PC-9 (cell line): ENCODE measurements at regions of chr12 and their contacts with region 1.

Region 1: DNA sequence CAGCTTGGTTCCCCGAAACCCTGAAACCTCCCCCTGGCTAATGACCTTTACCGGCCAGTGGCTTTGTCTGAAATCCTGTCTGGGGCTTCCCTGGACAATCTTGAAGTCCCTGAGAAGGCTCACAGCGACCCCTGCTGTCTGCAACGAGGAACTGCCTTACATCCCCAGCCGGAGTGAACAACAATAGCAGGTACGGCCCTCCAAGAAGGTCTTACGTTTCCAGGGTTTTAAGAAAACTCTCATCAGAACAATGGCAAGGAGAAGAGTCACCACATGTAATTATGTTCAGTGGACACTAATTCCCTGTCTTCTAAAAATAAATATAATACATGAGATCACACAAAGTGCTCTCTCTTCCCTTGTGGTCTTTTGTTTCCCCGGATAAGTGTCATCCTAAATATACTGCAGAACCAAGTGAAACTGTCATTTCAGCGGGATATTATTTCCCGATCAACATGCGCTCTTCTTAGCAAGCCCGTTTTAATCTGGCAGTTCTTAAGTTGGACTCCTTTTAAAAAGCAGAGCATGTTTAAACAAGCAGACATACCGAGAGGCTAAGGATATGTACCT is 53.3 kb downstream of the RBM19 start:
- DNase-seq: peak; percentile 44 to 70
- H3K4me3 ChIP-seq: no peak overlapping the region
- H3K27ac ChIP-seq: no peak overlapping the region
- H3K4me1 ChIP-seq: no peaks in the 10 kb centered on the region
- H3K27me3 ChIP-seq: no peaks in the 10 kb centered on the region
- CTCF ChIP-seq: peak; percentile 94

Region 2: GRCh38 chr12:112992541-112993398 is 920.1 kb before region 1 on chr12:
- CTCF ChIA-PET with region 1: no interaction called
- POLR2A ChIA-PET with region 1: no interaction called
- intact Hi-C with region 1: loop called (anchors 2 kb)
- DNase-seq: peak; percentile 48 to 56
- H3K4me3 ChIP-seq: no peak overlapping the region
- H3K27ac ChIP-seq: no peak overlapping the region
- H3K4me1 ChIP-seq: no peaks in the 10 kb centered on the region
- H3K27me3 ChIP-seq: peaks cover 10% of the 10 kb centered on the region; the same call in 1 of the 2 replicates
- CTCF ChIP-seq: peak; percentile 97

Region 3: GRCh38 chr12:113196996-113197395 is 715.8 kb before region 1 on chr12:
- CTCF ChIA-PET with region 1: no interaction called
- POLR2A ChIA-PET with region 1: no interaction called
- intact Hi-C with region 1: loop called (anchors 1 kb)
- DNase-seq: peak; percentile 66 to 69
- H3K4me3 ChIP-seq: no peak overlapping the region
- H3K27ac ChIP-seq: no peak overlapping the region
- H3K4me1 ChIP-seq: peaks cover 32% of the 10 kb centered on the region
- H3K27me3 ChIP-seq: no peaks in the 10 kb centered on the region
- CTCF ChIP-seq: peak; percentile 75

Region 4: DNA sequence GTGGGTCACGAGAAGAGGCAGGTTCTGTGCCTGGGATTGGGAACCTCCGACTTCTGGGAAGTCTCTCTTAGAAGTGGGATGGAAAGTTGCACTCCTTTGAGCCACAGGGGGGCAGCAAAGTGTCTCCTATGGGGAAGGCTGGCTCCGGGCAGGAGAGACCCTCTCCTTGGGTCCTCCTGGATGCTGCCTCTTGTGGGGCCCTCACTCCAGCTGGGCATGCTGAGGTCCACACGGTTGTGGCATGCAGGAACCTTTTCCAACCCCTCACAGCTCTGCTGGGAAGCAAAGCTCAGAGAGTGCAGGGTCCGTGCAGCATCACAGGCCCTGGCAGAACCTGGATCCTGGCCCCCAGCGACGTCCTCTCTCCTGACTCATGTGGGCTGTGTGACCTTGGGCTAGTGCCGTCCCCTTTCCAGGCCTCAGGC is 473.2 kb before region 1 on chr12:
- CTCF ChIA-PET with region 1: no interaction called
- POLR2A ChIA-PET with region 1: no interaction called
- intact Hi-C with region 1: loop called (anchors 1 kb)
- DNase-seq: peak in 1 of 2 experiments; percentile 35
- H3K4me3 ChIP-seq: no peak overlapping the region
- H3K27ac ChIP-seq: no peak overlapping the region
- H3K4me1 ChIP-seq: no peaks in the 10 kb centered on the region
- H3K27me3 ChIP-seq: no peaks in the 10 kb centered on the region
- CTCF ChIP-seq: peak; percentile 77

Region 5: GRCh38 chr12:113647048-113647447 is 265.8 kb before region 1 on chr12:
- CTCF ChIA-PET with region 1: no interaction called
- POLR2A ChIA-PET with region 1: no interaction called
- intact Hi-C with region 1: loop called (anchors 1 kb)
- DNase-seq: peak in 1 of 2 experiments; percentile 21
- H3K4me3 ChIP-seq: no peak overlapping the region
- H3K27ac ChIP-seq: no peak overlapping the region
- H3K4me1 ChIP-seq: peaks cover 8% of the 10 kb centered on the region; the same call in 1 of the 2 replicates
- H3K27me3 ChIP-seq: peaks cover 10% of the 10 kb centered on the region; the same call in 1 of the 2 replicates
- CTCF ChIP-seq: peak; percentile 38; the same call in 1 of the 2 replicates

Region 6: GRCh38 chr12:113867258-113867657 is 45.6 kb before region 1 on chr12:
- CTCF ChIA-PET with region 1: no interaction called
- POLR2A ChIA-PET with region 1: no interaction called
- intact Hi-C with region 1: no loop called
- DNase-seq: no peak
- H3K4me3 ChIP-seq: no peak overlapping the region
- H3K27ac ChIP-seq: no peak overlapping the region
- H3K4me1 ChIP-seq: no peaks in the 10 kb centered on the region
- H3K27me3 ChIP-seq: no peaks in the 10 kb centered on the region
- CTCF ChIP-seq: peak; percentile 49; the same call in 1 of the 2 replicates

Region 7: DNA sequence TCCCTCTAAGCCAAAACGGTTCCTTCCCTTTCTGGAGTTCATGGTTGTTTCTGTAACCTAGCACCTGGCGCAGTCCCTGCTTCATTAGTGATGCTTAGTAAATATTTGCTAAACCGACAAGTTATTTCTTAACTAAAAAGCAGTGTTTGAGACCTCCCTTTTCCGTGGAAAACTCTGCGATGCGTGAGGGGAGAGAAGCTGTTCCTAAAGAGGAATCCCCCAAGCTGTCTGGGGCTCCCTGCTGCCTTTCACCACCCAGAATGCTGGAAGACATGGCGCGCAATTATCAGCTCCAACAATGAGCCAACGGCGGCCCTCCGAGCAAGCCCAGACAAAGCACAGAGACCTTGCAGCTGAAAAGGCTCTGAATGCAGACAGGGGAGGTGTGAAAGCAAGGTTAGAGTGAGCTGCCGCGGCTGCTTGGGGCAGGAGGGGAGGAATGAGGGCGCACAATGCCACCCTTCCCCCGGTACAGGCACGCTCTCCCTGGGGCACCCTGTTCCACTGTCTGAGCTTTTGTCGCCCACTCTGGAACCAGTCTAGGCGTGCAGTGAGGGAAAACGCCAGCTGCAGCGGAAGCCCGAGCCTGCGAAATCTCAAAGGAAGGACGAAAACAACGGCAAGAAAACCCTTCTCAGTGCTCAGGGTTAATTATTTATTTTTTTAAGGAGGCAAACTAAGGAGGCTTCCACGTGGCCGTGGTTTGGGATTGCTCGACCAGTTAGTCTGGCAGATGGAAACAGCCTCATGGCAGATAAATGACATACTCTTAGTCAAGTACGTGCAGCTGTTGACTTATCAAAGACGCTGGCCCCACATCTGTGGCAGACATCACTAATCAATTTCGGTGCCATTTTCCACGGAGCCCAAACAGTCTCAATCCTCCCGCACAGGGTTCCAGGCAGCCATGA is 13.0 kb before region 1 on chr12:
- CTCF ChIA-PET with region 1: no interaction called
- POLR2A ChIA-PET with region 1: no interaction called
- intact Hi-C with region 1: no loop called
- DNase-seq: peak in 1 of 2 experiments; percentile 12
- H3K4me3 ChIP-seq: no peak overlapping the region
- H3K27ac ChIP-seq: no peak overlapping the region
- H3K4me1 ChIP-seq: no peaks in the 10 kb centered on the region
- H3K27me3 ChIP-seq: no peaks in the 10 kb centered on the region
- CTCF ChIP-seq: no peak